HAP-1 (cell line): ENCODE measurements at regions of chr3 and their contacts with region 1.

Region 1: DNA sequence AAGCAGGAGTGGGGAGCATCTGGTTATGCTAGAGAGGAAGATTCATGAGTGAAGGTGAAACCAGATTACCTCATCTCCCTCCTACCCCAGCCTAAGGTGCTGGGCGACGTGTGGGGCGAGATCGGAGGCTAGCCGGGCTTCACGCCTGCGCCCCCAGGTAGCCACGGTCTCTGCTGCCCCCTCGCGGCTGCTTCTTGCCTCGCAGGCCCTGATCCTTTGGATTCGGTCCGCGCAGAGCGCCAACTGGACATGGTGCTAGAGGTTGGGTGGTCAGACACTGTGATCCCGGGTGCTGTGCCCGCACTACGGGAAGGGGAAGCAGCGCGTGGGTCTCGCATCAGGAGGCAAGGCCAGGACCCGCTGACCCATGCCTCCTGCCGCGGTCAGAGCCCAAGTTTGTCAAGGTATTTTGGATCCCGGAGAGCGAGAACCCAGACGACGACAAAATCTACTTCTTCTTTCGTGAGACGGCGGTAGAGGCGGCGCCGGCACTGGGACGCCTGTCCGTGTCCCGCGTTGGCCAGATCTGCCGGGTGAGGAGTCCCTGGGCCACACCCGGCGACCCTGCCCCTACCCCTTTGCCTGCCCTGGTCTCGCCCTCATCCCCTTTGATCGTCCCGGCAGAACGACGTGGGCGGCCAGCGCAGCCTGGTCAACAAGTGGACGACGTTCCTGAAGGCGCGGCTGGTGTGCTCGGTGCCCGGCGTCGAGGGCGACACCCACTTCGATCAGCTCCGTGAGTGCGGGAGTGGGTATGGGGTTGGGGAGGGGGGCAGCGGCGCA is 4.2 kb downstream of the SEMA3B start:
- DNase-seq: peak; percentile 58 to 93
- H3K4me3 ChIP-seq: peak overlapping the region; percentile 25
- H3K4me1 ChIP-seq: no peaks in the 10 kb centered on the region; the same call in 1 of the 2 replicates
- H3K27me3 ChIP-seq: no peaks in the 10 kb centered on the region

Region 2: GRCh38 chr3:50121416-50122032 is 151.6 kb before region 1 on chr3:
- in situ Hi-C with region 1: loop called (anchors 5 kb)
- DNase-seq: peak; percentile 69 to 87
- H3K4me3 ChIP-seq: no peak overlapping the region
- H3K4me1 ChIP-seq: no peaks in the 10 kb centered on the region
- H3K27me3 ChIP-seq: no peaks in the 10 kb centered on the region

Region 3: DNA sequence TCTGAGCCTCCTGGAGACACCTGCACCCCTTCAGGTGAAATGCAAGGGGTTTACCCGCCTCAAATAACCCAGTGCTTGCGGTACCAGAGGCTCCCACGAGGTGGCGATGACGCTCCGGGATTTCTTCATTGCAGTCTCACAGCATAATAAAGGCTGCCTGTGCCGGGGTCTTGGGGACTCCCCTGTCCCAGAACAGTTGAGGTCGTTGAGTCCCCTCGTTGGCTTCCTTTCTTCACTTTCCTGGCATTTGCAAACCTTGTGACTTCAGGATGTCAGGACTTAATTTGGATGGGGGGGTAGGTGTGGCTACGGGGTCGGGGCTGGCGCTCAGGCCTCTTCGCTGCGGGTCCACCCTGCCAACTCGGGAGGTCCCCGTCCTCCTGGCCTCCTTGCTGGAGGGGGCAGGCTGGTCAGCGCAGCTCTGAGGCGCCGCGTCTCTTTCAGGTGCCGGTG is 80.4 kb before region 1 on chr3:
- in situ Hi-C with region 1: loop called (anchors 5 kb)
- DNase-seq: peak; percentile 30 to 87
- H3K4me3 ChIP-seq: no peak overlapping the region
- H3K4me1 ChIP-seq: 0 out of 2 replicates have a peak, but pooled peaks cover 3% of the 10 kb centered on the region
- H3K27me3 ChIP-seq: peaks cover 11% of the 10 kb centered on the region

Region 4: GRCh38 chr3:50807266-50807665 is 534.2 kb after region 1 on chr3:
- in situ Hi-C with region 1: no loop called
- DNase-seq: no peak
- H3K4me3 ChIP-seq: no peak overlapping the region
- H3K4me1 ChIP-seq: peaks cover 2% of the 10 kb centered on the region; the same call in 1 of the 2 replicates
- H3K27me3 ChIP-seq: no peaks in the 10 kb centered on the region

Region 5: DNA sequence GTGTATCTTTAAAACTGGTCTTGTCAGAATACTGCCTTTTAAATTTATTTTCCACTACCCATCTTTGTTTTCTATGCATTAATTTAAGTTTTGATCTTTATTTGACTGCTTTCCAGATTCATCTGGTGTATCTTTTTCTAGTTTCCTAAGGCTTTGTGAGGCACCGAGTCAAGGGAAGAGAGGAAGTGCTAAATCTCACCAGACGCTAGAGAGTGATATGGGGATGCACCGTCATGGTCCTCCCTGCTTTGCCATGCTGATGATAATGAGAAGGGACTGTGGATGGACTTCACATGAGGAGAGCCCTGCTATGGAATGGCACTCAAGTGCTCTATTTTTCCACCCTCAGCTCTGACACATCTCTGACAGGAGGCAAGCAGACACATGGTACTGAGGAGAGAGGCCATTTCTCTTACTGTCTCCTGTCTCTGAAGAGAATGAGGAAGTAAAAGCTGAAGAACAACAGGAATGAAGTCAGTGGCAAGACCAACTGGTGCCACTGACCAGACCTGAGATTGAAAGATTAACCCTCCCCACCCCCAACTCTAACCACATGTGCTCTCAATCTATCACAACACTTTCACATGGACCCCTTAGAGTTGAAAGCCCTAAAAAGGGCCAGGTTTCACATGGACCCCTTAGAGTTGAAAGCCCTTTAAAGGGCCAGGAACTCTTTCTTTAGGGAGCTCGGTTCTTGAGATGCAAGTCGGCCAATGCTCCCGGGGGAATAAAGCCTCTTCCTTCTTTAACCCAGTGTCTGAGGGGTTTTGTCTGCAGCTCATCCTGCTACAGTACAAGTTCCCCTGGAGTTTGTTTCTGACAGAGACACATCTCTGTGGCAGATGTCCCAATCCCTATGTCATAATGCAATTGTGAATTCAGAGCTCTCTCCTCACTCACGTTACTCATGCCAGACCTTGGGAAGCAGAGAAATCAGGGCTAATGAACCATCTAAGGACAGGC is 1587.9 kb after region 1 on chr3 and contains the start of gene IQCF2:
- in situ Hi-C with region 1: no loop called
- DNase-seq: no peak
- H3K4me3 ChIP-seq: no peak within 1 kb of the TSS
- H3K4me1 ChIP-seq: no peaks in the 10 kb centered on the region
- H3K27me3 ChIP-seq: peaks cover 3% of the 10 kb centered on the region; the same call in 1 of the 2 replicates